AG04449 (cell line): ENCODE measurements at regions of chr11 and their contacts with region 1.

Region 1: DNA sequence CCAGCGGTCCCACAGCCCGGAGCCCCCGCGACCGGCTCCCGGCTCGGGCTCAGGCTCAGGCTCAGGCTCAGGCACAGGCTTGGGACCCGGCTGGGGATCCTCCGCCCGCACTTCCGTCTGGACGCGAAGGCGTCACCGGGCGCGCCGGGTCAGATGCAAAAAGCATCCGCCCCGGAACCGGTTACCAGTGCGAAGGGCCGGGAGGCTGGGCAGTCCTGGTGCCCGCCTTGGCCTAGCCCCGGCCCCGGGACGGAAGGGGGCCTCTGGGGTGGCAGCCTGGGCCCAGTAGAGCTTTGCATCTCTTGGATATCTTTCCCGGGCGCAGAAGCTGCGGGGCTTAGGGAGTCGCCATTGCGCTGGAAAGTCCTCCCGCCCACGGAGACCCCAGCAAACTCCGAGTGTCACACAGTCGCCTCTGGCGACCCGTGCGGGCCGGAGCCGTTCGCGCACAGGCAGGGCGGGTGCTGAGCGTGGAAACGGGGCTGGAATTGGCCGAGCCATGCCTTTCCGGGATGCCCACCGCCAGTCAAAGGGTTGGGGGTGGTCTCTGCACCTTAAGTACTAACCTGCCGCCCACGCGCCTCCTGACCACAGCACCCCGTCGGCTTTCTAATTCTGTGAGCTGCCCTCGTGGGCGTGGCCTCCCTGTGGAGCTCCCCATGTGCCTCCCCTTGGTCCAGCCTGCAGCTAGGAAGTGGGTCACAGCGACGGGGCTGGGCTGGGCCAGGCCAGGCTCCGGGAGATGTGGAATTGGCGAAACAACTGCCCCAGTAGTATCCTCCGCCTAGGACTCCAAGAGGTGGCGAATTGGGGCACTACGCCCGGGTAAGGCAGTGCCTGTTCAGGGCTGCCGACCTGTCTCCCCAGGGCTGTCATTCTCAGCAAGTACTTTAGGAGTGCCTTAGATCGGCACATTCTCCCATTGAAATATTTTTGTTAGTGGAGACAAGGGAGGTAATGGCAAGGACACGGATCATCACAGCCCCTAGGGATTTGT is at the start of gene TMEM9B:
- DNase-seq: no peak
- H3K4me3 ChIP-seq: peak within 1 kb of the TSS; percentile 87
- CTCF ChIP-seq: no peak

Region 2: GRCh38 chr11:8566613-8567210 is 397.9 kb before region 1 on chr11:
- CTCF ChIA-PET with region 1: interaction called, 11 read pairs
- POLR2A ChIA-PET with region 1: no interaction called
- DNase-seq: no peak
- H3K4me3 ChIP-seq: no peak overlapping the region
- CTCF ChIP-seq: peak; percentile 18

Region 3: DNA sequence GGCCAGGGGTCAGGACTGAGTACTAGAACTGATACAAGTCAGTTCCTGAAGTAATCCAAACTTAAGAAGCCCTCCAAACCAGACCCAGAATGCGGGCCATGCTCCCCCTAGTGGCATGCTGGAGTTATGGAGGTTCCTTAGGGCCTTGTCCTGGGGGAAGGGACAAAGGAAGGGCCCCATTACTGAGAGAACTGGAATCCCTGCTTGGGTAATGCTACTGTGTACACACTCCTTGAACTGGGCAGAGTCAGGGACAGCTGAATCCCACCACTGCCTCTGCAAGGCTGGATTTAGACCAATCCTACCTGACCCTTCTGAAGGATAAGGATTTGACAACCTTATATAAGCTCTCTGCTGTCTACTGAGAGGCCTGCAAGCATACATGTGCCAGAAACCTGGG is 151.0 kb before region 1 on chr11:
- CTCF ChIA-PET with region 1: interaction called, 50 read pairs
- POLR2A ChIA-PET with region 1: no interaction called
- DNase-seq: no peak
- H3K4me3 ChIP-seq: no peak overlapping the region
- CTCF ChIP-seq: peak; percentile 89

Region 4: GRCh38 chr11:8870411-8871170 is 94.0 kb before region 1 on chr11:
- CTCF ChIA-PET with region 1: interaction called, 10 read pairs
- POLR2A ChIA-PET with region 1: interaction called, 5 read pairs
- DNase-seq: no peak
- H3K4me3 ChIP-seq: peak overlapping the region; percentile 77
- CTCF ChIP-seq: no peak

Region 5: GRCh38 chr11:8922691-8923090 is 41.9 kb before region 1 on chr11:
- CTCF ChIA-PET with region 1: interaction called, 83 read pairs
- POLR2A ChIA-PET with region 1: no interaction called
- DNase-seq: no peak
- H3K4me3 ChIP-seq: no peak overlapping the region
- CTCF ChIP-seq: no peak

Region 6: DNA sequence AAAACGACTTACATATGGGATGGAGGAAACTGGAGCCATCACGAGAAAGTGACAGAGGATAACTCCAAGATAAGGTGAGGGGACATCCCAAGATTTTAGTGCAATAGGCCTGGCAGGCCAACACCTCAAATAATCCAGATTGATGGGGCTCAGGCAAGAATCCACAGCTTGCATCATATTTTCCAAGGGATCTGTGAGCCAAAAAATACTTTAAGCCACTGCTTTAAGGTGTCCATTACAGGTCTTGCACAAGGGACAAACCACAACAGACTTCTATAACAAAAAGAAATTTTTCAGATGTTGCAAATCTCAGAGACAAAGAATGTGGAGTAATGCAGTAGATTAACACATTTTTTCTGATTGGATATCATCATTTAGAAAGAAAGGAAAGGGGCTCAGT is 254.9 kb after region 1 on chr11:
- CTCF ChIA-PET with region 1: no interaction called
- POLR2A ChIA-PET with region 1: no interaction called
- DNase-seq: no peak
- H3K4me3 ChIP-seq: no peak overlapping the region
- CTCF ChIP-seq: no peak